Activated CD4-positive, alpha-beta memory T cell treated with anti-CD3 and anti-CD28 coated beads, Interleukin-2, amount 10 ng/mL, durations not matched to agents 7 days and 5 days (primary cell): ENCODE measurements at regions of chr17 and their contacts with region 1.

Region 1: DNA sequence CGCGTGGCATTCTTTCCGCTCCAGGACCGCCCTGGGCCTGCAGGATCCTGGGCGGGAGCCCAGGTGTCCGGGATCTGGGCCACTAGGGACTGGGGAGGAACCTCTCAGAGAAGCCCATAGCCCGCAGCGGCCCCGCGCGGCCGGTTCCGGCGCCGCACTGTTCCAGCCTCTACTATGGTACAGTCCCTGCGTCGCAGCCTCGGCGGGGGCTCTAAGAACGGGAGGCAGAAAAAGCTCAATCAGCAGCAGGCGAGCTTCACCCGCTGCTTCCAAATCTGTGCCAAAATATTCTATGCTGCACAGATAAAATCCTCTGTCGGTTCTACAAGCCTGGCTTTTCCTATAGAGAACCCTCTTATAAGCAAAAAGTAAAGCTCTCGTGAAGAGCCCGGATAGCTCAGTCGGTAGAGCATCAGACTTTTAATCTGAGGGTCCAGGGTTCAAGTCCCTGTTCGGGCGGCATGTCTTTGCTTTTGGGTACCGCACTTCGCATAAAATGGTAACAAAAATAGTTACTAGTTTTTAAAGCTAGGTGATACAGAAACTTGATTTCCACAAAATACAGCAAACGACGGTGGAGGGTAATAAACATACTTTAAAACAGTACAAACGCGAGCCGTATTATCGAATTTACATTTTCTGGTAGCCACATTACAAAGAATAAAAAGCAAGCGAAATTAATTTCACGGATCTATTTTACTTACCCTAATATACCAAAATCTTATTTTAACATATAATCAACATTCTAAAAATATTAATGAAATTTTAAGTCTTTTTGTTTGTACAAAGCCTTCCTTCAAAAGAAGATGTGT is 661 bp upstream of the ALOXE3 start:
- DNase-seq: peak; percentile 86
- H3K4me3 Mint-ChIP-seq: peak overlapping the region; percentile 80
- H3K27ac Mint-ChIP-seq: peak overlapping the region; percentile 89
- H3K4me1 Mint-ChIP-seq: peaks cover 56% of the 10 kb centered on the region
- H3K27me3 Mint-ChIP-seq: peaks cover 60% of the 10 kb centered on the region

Region 2: DNA sequence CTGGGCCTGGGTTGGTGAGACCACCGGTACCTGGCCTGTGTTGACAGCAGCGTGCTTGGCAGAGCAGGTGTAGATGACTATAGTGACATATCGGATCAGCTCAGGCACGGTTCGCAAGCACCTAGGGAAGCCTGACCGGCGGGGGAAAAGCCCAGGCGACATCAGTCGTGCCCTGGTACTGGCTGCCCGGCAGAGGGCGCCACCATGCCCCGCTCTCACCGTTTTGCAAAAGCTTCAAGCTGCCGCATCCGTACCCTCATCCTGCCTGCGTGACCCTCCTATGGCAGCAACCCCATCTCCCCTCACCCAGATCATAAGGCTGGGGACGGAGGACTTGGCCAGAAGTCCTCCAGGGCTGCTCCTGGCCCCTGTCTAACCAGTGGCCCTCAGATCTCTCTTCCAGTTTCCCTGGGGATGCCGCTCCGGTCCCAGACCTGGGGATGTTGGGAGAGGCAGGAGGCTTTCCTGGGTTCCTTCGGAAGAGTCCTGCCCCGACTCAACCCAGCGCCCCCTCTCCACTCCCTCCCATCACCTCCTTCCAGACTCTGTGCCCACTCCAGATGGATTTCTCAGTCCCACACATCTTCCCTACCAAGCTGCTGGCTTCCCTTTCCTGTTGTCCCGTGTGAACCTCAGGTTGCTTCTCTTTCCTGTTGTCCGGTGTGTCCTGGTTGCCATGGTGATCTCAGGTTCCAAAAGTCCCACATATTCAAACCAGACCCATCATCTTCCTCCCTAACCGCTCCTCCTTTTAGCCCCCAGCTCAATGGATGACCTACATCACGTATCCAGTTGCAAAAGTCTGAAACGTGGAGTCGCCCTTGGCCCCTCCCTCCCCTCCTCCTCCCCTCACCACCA is 45.1 kb before region 1 on chr17:
- CTCF ChIA-PET with region 1: interaction called, 34 read pairs
- POLR2A ChIA-PET with region 1: interaction called, 3 read pairs
- DNase-seq: peak; percentile 84
- H3K4me3 Mint-ChIP-seq: peak overlapping the region; percentile 53
- H3K27ac Mint-ChIP-seq: no peak overlapping the region
- H3K4me1 Mint-ChIP-seq: peaks cover 27% of the 10 kb centered on the region
- H3K27me3 Mint-ChIP-seq: peaks cover 62% of the 10 kb centered on the region

Region 3: DNA sequence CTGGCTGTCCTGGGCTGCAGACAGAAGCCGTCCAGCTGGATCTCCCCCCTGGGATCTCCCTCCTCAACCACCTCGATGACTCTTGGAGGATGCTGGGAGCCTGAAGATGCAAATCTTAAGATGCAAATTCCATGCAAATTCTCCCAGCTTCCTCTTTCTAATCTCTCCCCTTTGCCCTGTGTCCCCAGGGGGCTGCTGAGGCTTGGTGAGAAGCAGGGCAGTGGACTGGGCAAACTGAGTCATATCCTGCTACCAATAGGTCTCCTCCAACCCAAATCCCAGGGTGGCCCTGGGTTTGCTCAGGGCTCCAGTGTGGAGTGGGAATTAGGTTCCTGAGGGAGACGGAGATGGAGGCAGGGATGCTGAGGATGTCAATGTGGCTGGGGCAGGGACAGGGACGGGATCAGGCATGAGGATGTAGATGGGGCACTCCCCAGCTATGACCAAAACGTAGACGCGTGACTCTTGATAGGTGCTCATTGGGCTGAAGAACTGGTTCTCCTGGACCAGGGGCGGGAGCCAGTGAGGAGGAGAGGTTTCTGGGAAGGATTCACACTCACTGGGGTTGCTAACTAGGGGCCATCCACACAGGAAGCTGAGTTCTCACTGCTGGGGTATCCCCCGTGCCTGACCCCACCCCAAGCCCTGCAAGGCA is 27.8 kb before region 1 on chr17:
- CTCF ChIA-PET with region 1: interaction called, 68 read pairs
- POLR2A ChIA-PET with region 1: interaction called, 3 read pairs
- DNase-seq: no peak
- H3K4me3 Mint-ChIP-seq: no peak overlapping the region
- H3K27ac Mint-ChIP-seq: no peak overlapping the region
- H3K4me1 Mint-ChIP-seq: peaks cover 16% of the 10 kb centered on the region
- H3K27me3 Mint-ChIP-seq: peaks cover 45% of the 10 kb centered on the region

Region 4: GRCh38 chr17:8151123-8151640 is 32.2 kb after region 1 on chr17:
- CTCF ChIA-PET with region 1: interaction called, 44 read pairs
- POLR2A ChIA-PET with region 1: interaction called, 14 read pairs
- DNase-seq: peak; percentile 92
- H3K4me3 Mint-ChIP-seq: peak overlapping the region; percentile 84
- H3K27ac Mint-ChIP-seq: peak overlapping the region; percentile 84
- H3K4me1 Mint-ChIP-seq: peaks cover 35% of the 10 kb centered on the region
- H3K27me3 Mint-ChIP-seq: no peaks in the 10 kb centered on the region

Region 5: DNA sequence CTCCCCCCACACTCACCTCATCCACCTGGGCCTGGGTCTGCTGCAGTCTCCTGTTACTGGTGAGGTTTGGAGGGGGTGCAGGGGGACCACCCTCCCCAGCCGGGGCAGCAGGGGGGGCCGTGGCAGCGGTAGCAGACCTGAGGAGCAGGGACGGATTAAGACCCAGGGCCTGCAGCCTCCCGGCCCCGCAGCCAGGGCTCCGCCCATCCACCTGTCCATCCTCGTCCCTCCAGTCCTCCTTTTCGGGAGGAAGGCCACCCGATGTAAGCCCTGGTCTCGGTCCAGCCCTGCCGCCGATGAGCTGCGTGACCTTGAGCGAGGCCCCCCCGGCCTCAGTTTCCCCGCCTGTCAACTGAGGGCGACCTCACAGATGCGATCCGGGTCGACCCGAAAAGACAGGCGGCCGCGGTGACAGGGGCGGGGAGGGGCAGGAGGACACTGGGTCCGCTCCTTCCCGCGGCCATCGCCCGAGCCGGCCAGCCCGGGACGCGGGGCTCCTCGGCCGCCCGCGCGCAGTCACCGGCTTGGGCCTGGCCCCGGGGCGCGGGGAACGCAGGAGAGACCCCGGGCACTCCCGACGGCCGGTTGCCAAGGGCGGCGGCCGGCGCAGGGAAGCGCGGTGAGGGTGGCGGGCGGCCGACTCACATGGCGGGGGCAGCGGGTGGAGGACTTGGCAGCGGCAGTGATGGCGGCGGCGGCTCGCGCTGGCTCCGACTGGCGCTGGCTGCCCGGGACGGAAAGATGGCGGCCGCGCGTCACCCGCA is 43.4 kb after region 1 on chr17 and contains the start of gene VAMP2:
- CTCF ChIA-PET with region 1: interaction called, 44 read pairs
- POLR2A ChIA-PET with region 1: interaction called, 20 read pairs
- DNase-seq: peak; percentile 89
- H3K4me3 Mint-ChIP-seq: peak within 1 kb of the TSS; percentile 81
- H3K27ac Mint-ChIP-seq: peak within 1 kb of the TSS; percentile 98
- H3K4me1 Mint-ChIP-seq: peaks cover 59% of the 10 kb centered on the region
- H3K27me3 Mint-ChIP-seq: no peaks in the 10 kb centered on the region
- total RNA-seq, gene VAMP2: 75.2 to 79.1 TPM

Region 6: GRCh38 chr17:8222630-8223356 is 103.8 kb after region 1 on chr17:
- CTCF ChIA-PET with region 1: interaction called, 19 read pairs
- POLR2A ChIA-PET with region 1: interaction called, 29 read pairs
- DNase-seq: peak; percentile 90
- H3K4me3 Mint-ChIP-seq: peak overlapping the region; percentile 95
- H3K27ac Mint-ChIP-seq: peak overlapping the region; percentile 99
- H3K4me1 Mint-ChIP-seq: peaks cover 69% of the 10 kb centered on the region
- H3K27me3 Mint-ChIP-seq: peaks cover 2% of the 10 kb centered on the region

Region 7: GRCh38 chr17:8294814-8295316 is 175.9 kb after region 1 on chr17:
- CTCF ChIA-PET with region 1: interaction called, 13 read pairs
- POLR2A ChIA-PET with region 1: interaction called, 6 read pairs
- DNase-seq: no peak
- H3K4me3 Mint-ChIP-seq: peak overlapping the region; percentile 89
- H3K27ac Mint-ChIP-seq: peak overlapping the region; percentile 83
- H3K4me1 Mint-ChIP-seq: peaks cover 53% of the 10 kb centered on the region
- H3K27me3 Mint-ChIP-seq: no peaks in the 10 kb centered on the region

Region 8: GRCh38 chr17:8447799-8448198 is 328.8 kb after region 1 on chr17:
- CTCF ChIA-PET with region 1: no interaction called
- POLR2A ChIA-PET with region 1: no interaction called
- DNase-seq: no peak
- H3K4me3 Mint-ChIP-seq: no peak overlapping the region
- H3K27ac Mint-ChIP-seq: no peak overlapping the region
- H3K4me1 Mint-ChIP-seq: peaks cover 17% of the 10 kb centered on the region
- H3K27me3 Mint-ChIP-seq: no peaks in the 10 kb centered on the region